HepG2 (cell line): ENCODE measurements at regions of chr5 and their contacts with region 1.

Region 1: GRCh38 chr5:140497897-140498296 is 49.6 kb upstream of the EIF4EBP3 start:
- DNase-seq: peak; percentile 56
- ATAC-seq: peak; percentile 85
- H3K4me3 ChIP-seq: no peak overlapping the region
- H3K27ac ChIP-seq: peak overlapping the region; percentile 14
- H3K4me1 ChIP-seq: peaks cover 19% of the 10 kb centered on the region
- H3K27me3 ChIP-seq: no peaks in the 10 kb centered on the region
- CTCF ChIP-seq: no peak
- EP300 ChIP-seq: no peak; a peak in 1 of 4 replicates
- POLR2A ChIP-seq: no peak
- RAD21 ChIP-seq: no peak

Region 2: DNA sequence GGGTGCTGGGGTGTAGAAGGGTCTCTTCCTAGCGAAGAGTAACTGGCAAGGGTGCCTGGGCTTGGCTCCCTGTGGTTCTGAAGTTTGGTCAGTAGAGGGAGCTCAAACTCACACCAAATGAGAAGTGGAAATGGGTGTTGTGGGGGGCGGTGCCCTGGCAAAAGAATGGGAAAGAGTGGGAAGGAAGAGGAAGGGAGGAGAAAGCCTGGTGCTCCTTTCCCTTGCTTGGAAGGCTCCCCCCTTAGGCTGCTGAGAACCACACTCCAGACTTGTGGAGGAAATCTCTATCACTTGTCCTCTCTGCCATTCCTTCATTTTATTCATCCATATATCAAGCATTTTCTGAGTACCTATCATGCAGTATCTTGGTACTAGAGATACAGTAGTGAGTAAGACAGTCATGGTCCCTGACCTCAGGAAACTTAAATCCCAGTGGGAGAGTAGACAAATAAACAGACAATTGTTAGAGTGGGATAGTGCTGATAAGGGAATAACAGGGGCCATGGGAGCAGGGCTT is 124.9 kb before region 1 on chr5:
- CTCF ChIA-PET with region 1: no interaction called
- POLR2A ChIA-PET with region 1: no interaction called
- in situ Hi-C with region 1: no loop called
- intact Hi-C with region 1: loop called (anchors 10 kb)
- DNase-seq: peak; percentile 65
- ATAC-seq: peak; percentile 86
- H3K4me3 ChIP-seq: no peak overlapping the region
- H3K27ac ChIP-seq: no peak overlapping the region
- H3K4me1 ChIP-seq: peaks cover 24% of the 10 kb centered on the region
- H3K27me3 ChIP-seq: no peaks in the 10 kb centered on the region
- CTCF ChIP-seq: peak; percentile 91
- EP300 ChIP-seq: no peak
- POLR2A ChIP-seq: no peak
- RAD21 ChIP-seq: peak; percentile 73